ENCODE measurements at regions of chr20 and their contacts with region 1.

Region 1: GRCh38 chr20:62668441-62669027 is 26.2 kb downstream of the SLCO4A1 start:
- DNase-seq: peak; percentile 85
- ATAC-seq: peak; percentile 57

Region 2: DNA sequence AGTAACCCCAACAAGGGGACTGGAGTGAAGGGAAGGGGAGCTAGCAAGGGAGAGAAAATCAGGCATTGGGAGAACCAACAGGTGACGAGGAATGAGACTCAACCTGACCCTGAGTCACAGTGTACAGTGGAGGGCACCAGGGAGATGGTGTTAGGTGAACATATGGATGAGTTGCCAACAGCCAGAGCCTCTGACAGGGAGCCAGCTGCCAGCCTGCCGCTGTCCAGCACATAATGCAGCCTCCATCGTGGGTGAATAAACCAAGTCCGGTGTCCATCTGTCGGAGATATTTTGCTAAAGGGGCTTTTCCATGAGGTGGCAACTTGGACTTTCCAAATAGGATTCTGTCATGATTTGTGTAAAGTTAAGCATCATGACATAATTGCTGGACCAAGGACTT is 1328.4 kb before region 1 on chr20:
- intact Hi-C with region 1: no loop called
- DNase-seq: no peak
- ATAC-seq: no peak

Region 3: DNA sequence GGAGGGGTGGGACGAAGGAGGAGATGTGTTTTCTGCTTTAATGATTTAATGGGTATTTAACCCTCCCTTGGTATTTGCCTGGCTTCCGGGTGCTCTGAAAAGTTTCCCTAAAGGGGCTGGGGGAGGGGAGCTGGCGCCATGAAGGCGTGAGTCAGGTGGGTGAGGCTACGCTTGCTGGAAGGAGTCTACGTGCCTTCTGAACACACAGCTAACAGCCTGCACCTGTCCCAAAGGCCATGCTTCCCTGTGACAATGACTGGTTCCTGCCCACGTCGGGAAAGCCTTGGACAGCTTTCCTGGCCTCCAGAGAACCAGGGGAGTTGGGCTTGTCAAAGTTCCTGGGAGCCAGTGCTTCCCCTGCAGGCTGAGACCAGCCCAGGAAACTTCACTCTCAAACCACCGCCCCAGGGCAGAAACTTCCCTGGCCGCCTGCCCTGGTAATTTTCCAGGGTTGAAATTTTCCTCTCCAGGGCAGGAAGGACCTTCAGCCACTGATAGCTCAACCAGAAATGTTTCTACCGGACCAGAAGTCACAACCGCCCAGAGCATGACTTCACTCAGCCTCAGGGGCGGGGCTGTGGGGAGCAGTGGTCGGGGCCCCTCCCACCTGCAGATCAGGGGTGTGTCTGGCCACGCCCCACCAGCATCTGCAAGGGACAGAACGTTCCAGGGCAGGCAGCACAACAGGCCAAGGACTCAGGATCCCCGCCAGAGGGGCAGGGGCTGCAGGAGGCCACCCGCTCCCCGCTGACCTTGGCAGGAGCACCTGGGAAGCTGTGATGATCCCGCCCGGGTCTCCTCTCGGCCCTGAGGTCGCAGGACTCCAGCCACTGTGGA is 44.8 kb before region 1 on chr20:
- intact Hi-C with region 1: no loop called
- DNase-seq: peak; percentile 90
- ATAC-seq: peak; percentile 96

Region 4: GRCh38 chr20:62793912-62794724 is 125.6 kb after region 1 on chr20:
- intact Hi-C with region 1: loop called (anchors 5 kb)
- DNase-seq: peak; percentile 99
- ATAC-seq: peak; percentile 91

Measured in sciatic nerve (tissue), 2 donors.